BJ (cell line): ENCODE measurements at regions of chr3 and their contacts with region 1.

Region 1: DNA sequence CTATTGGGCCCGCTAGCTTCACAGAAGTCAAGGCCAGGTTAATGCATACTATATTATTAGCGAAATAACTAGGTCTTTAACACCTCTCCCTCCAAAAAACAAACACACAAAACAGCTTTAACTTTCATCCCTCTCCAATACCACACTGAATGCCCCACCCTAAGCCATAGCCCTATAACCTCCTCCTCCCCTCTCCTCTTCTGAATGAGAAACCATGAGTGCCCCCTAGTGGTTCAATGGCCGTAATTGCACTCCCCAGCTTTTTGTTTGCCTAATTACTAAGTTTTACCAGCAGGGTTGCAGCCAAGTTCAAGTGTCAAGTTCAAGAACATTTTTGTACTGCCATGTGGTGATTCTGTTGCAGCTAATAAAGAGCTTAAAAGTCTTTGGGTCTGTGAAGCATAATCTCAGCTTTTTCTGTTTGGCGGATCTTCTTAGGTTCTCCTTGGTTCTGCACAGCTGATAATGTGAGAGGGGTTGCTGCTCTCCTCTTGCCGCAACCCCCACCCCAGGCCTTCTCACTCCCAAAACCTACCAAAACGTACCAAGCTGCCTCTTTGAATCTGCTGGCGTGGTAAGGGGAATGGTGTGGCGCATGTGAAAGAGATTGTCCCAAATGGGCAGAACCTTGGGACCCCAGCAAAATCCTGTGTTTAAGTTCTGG is 57.9 kb downstream of the RPL22L1 start:
- DNase-seq: no peak
- H3K4me3 ChIP-seq: no peak overlapping the region
- H3K27me3 ChIP-seq: no peaks in the 10 kb centered on the region
- CTCF ChIP-seq: peak; percentile 84

Region 2: DNA sequence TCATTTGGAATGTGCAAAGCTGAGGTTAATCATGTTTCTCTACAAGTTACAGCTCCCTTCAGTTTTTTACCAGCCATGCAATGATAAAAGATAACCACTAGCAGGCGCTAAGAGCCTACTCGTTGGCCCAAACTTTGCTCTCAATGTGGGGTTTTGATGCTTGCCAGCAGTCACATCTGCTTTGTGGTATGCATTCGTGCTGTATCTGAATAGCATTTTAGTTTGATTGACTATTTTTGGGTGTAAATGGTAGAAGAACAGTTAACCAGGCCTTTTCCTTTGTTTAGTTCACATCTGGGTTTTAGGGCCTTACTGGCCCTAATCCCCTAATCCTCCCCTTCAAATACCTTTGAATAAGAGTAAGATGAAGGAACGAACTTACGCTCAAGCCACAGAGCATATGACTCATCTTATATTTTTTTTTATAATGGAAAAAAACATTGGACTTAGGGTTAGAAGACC is 397.8 kb before region 1 on chr3:
- CTCF ChIA-PET with region 1: interaction called, 220 read pairs
- POLR2A ChIA-PET with region 1: interaction called, 3 read pairs
- DNase-seq: peak; percentile 95
- H3K4me3 ChIP-seq: no peak overlapping the region
- H3K27me3 ChIP-seq: no peaks in the 10 kb centered on the region
- CTCF ChIP-seq: peak; percentile 97

Region 3: GRCh38 chr3:170553788-170554757 is 258.0 kb before region 1 on chr3:
- CTCF ChIA-PET with region 1: interaction called, 20 read pairs
- POLR2A ChIA-PET with region 1: no interaction called
- DNase-seq: no peak
- H3K4me3 ChIP-seq: no peak overlapping the region
- H3K27me3 ChIP-seq: no peaks in the 10 kb centered on the region
- CTCF ChIP-seq: no peak

Region 4: DNA sequence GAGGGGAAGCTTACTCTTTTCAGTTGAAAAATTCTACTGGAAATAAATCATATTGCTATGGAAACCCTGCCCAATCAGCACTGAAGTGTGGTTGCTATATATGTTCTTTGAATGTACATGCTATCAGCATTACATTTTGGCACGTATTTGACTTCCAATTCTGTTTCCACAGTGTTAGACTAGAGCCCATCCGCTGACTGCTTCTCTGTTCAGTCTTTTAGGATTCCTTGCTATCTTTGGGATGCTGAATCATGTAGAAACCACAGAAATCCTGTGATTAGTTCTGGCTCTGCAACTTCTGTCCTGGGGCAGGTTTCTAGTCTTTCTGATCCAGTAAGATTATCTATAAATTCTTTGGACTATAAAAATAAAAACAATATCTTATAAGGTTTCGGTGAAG is 97.9 kb before region 1 on chr3:
- CTCF ChIA-PET with region 1: interaction called, 13 read pairs
- POLR2A ChIA-PET with region 1: interaction called, 5 read pairs
- DNase-seq: no peak
- H3K4me3 ChIP-seq: no peak overlapping the region
- H3K27me3 ChIP-seq: no peaks in the 10 kb centered on the region
- CTCF ChIP-seq: no peak

Region 5: GRCh38 chr3:170740726-170741591 is 71.1 kb before region 1 on chr3:
- CTCF ChIA-PET with region 1: interaction called, 21 read pairs
- POLR2A ChIA-PET with region 1: no interaction called
- DNase-seq: peak; percentile 90
- H3K4me3 ChIP-seq: no peak overlapping the region
- H3K27me3 ChIP-seq: no peaks in the 10 kb centered on the region
- CTCF ChIP-seq: no peak

Region 6: DNA sequence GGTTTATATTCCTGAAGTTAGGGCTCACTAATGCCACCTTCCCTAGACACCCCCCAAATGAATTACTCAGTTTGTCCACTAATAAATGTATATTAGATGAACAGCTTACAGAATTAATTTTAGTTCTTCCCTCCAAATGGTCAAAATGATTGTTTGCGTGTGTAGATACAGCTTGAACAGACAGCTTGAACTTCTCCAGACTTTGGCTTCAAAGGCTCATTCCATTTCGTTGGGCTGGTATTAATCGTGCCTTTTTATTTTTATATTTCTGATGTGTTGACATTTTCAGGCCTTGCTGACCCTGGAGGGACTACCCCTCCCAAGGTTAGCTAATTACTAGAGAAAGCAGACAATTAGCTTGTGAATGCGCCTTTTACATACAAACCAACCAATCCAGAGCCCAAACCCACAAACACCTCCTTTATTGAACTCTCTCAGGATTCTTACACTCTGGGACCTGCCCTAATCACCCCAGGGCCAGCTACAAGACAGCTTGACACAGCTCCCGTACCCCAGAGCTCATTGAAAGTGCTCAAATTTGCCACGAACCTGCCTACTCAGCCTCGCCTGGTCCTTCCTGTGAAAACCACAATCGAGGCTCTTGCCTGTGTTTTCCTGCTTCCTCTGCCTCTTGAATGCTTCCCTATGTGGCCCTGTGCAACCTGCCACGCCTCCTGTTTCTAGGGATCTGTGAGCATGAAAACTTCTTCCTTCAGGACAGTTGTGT is 17.6 kb after region 1 on chr3:
- CTCF ChIA-PET with region 1: interaction called, 13 read pairs
- POLR2A ChIA-PET with region 1: no interaction called
- DNase-seq: no peak
- H3K4me3 ChIP-seq: no peak overlapping the region
- H3K27me3 ChIP-seq: peaks cover 5% of the 10 kb centered on the region
- CTCF ChIP-seq: no peak

Region 7: GRCh38 chr3:171038342-171039138 is 226.5 kb after region 1 on chr3:
- CTCF ChIA-PET with region 1: no interaction called
- POLR2A ChIA-PET with region 1: no interaction called
- DNase-seq: no peak
- H3K4me3 ChIP-seq: no peak overlapping the region
- H3K27me3 ChIP-seq: no peaks in the 10 kb centered on the region; the same call in 1 of the 2 replicates
- CTCF ChIP-seq: no peak